Sigmoid colon (tissue), 7 donors: ENCODE measurements at regions of chr1 and their contacts with region 1.

Region 1: GRCh38 chr1:64242895-64243756 is 39.7 kb downstream of the UBE2U start:
- DNase-seq: no peak
- H3K4me3 ChIP-seq: no peak overlapping the region
- H3K27ac ChIP-seq: no peak overlapping the region
- H3K4me1 ChIP-seq: peaks cover 0 to 3% (median 0%) of the 10 kb centered on the region in 4 donors
- H3K27me3 ChIP-seq: no peaks in the 10 kb centered on the region
- CTCF ChIP-seq: peak in 3 of 4 experiments; percentile 29 to 62 (median 45)
- EP300 ChIP-seq: no peak
- POLR2A ChIP-seq: no peak

Region 2: GRCh38 chr1:63674238-63674864 is 568.8 kb before region 1 on chr1:
- intact Hi-C with region 1: loop called (anchors 2 kb)
- DNase-seq: peak; percentile 96
- H3K4me3 ChIP-seq: no peak overlapping the region
- H3K27ac ChIP-seq: peak overlapping the region in 3 of 4 donors; percentile 1 to 61 (median 56)
- H3K4me1 ChIP-seq: peaks cover 0 to 19% (median 12%) of the 10 kb centered on the region in 4 donors
- H3K27me3 ChIP-seq: no peaks in the 10 kb centered on the region
- CTCF ChIP-seq: peak; percentile 57 to 70 (median 68)
- EP300 ChIP-seq: no peak
- POLR2A ChIP-seq: no peak

Region 3: GRCh38 chr1:63691701-63692425 is 551.3 kb before region 1 on chr1:
- intact Hi-C with region 1: loop called (anchors 1 kb)
- DNase-seq: peak; percentile 84
- H3K4me3 ChIP-seq: no peak overlapping the region
- H3K27ac ChIP-seq: peak overlapping the region in 3 of 4 donors; percentile 57 to 74 (median 60)
- H3K4me1 ChIP-seq: peaks cover 0 to 30% (median 20%) of the 10 kb centered on the region in 4 donors
- H3K27me3 ChIP-seq: no peaks in the 10 kb centered on the region
- CTCF ChIP-seq: peak; percentile 62 to 82 (median 68)
- EP300 ChIP-seq: peak in 1 of 4 donors; percentile 38
- POLR2A ChIP-seq: no peak

Region 4: DNA sequence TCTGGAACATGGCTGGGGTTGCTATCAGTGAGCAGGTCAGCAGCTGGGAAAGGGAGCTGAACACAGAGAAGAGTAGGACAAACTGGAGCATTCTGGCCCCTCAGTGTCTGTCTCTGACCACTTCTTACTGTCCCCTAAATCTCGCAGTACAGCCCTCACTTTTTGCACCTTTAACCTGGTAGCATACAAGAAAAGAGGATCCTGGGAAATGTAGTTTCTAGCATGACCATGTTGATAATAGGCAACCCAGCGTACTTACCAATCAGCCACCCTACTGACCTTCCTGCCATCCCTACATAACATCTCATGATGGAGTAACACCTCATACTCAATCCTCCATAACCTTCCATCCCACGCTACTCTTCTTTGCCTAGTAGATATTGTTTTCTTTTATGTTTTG is 402.6 kb after region 1 on chr1:
- intact Hi-C with region 1: no loop called
- DNase-seq: no peak
- H3K4me3 ChIP-seq: no peak overlapping the region
- H3K27ac ChIP-seq: no peak overlapping the region
- H3K4me1 ChIP-seq: no peaks in the 10 kb centered on the region
- H3K27me3 ChIP-seq: no peaks in the 10 kb centered on the region
- CTCF ChIP-seq: no peak
- EP300 ChIP-seq: no peak
- POLR2A ChIP-seq: no peak